Right ventricle myocardium superior (tissue), 1 donor: ENCODE measurements at regions of chr5 and their contacts with region 1.

Region 1: DNA sequence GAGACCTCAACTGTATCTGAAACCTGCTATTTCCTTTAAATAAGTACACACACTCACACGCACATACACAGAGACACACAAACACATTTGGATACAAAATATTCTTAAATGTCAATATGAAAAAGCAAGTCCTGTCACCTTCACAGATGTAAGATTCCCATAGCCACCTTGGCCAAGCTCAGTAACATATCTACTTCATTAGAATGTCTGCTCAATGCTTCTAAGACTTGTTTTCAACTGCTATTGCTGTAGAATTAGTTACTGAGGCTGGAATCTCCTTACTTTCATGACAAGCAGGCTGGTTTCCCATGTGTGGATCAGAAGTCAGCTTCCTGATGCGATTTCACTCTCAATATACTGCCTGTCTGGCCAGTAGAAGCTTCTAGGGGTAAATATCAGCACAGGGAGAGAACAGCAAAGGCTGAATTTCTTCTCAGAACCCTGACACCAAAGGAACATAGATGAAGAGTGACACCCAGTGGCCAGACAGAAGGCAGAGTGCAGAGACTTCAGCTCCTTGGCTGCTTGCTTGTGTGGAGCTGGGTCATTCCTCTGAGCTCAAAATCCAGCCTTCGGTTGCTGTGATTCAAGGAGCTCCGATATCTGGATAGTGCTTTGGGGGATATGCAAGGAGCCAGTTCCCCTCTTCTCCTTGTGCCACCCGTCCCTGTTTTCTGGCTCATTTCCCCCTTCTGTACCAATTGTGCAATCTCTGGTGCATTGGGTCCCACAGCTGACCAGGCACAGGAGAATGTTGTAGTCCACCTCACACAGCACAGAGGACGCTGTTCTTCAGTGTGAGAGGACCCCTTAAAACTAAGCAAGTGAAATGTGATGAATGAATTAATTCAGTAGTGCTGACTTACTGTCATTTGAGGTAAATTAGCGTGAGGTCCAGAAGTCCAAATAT is 26.6 kb upstream of the ABLIM3 start:
- DNase-seq: no peak
- ATAC-seq: peak; percentile 98

Region 2: DNA sequence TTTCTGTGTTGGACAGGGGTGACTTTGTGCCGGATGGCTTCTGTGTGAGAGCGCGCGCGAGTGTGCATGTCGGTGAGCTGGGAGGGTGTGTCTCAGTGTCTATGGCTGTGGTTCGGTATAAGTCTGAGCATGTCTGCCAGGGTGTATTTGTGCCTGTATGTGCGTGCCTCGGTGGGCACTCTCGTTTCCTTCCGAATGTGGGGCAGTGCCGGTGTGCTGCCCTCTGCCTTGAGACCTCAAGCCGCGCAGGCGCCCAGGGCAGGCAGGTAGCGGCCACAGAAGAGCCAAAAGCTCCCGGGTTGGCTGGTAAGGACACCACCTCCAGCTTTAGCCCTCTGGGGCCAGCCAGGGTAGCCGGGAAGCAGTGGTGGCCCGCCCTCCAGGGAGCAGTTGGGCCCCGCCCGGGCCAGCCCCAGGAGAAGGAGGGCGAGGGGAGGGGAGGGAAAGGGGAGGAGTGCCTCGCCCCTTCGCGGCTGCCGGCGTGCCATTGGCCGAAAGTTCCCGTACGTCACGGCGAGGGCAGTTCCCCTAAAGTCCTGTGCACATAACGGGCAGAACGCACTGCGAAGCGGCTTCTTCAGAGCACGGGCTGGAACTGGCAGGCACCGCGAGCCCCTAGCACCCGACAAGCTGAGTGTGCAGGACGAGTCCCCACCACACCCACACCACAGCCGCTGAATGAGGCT is 288.5 kb before region 1 on chr5 and contains the start of gene ADRB2:
- intact Hi-C with region 1: loop called (anchors 10 kb)
- DNase-seq: peak; percentile 97
- ATAC-seq: peak; percentile 95
- total RNA-seq, gene ADRB2: 5.6 TPM

Region 3: GRCh38 chr5:149002761-149003689 is 111.6 kb before region 1 on chr5:
- intact Hi-C with region 1: no loop called
- DNase-seq: no peak
- ATAC-seq: no peak

Region 4: GRCh38 chr5:149035372-149035790 is 79.3 kb before region 1 on chr5:
- intact Hi-C with region 1: loop called (anchors 2 kb)
- DNase-seq: peak; percentile 81
- ATAC-seq: peak; percentile 89

Region 5: DNA sequence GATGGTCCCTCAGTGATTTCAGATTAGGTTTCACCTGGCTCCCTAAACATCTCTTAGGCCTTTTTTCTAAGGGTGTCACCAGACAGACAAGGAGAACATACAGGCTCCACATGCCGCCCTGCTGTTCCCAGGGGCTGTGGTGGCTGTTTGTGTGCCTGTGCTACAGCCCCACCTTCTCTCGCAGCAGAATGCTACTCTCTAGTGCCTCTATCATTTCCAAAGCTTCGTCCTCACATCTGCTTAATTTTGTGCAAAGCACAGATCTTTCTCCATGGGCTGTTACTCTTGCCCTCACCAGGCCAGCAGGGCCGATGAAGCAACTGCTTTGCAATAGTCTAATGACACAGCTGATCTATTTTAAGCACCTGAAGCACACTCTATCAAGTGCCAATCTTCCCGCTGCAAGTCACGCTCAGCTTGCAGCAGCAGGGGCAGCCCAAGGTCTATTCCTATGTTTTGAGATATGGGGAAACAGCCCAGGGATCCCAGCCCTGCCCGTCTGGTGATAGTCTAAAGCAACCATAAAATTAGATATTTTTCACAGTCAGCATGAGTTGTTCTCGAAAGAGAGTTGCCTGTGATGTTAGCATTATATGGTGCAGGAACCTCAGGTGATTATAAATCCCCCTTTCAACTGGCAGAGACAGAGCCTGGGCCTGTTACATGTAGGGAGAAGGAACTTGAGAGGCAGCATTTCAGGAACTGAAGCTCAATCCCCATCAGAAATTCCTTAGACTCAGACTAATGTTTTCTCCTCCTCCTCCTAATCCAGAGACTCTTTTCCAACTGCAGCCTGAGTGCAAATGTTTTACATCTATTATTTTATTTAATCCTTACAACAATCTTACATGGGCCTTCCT is 39.3 kb after region 1 on chr5:
- intact Hi-C with region 1: no loop called
- DNase-seq: peak; percentile 68
- ATAC-seq: peak; percentile 77

Region 6: GRCh38 chr5:149466457-149466972 is 351.9 kb after region 1 on chr5:
- intact Hi-C with region 1: no loop called
- DNase-seq: peak; percentile 40
- ATAC-seq: peak; percentile 7